Psoas muscle (tissue), 8 donors: ENCODE measurements at regions of chr2 and their contacts with region 1.

Region 1: DNA sequence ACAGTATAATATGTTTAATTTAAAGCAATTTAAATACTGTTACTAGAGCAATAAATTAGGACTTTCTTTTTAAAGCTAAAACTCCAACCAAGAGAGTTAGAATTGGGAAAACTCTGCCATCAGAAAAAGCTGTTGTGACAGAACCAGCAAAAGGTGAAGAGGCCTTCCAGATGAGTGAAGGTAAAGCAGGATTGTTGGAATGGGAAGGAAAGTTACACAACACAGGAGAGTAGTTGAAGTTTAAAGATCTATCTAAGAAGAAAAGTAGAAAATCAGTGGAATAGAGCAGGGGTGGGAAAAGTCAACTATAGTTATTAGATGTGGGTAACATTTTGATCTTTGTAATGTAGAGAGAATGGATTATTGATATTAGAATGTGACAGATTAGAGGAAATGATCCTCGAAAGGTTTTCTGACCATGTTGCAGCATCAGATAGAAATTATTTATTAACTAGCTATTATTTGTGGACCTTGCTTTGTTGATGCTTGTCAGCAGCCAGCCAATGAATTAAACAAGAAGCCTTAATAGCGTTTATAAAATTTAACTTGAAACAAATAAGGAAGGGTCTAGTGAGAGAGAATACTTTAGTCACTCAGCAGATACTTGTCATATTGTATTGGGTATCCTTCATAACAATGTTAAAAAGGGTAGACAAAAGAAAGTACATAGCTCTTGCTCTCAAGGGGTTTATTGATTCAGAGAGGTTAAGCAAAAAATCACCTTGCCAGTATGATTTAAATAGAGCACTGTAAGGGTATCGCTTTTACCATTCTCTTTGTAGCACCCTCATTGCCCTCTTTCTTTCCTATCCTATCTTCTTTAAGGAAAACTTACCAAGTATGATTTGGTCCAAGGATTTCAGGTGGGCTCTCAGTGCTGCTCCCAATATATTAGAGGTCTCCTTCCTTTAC is 24.6 kb upstream of the DYSF start:
- DNase-seq: no peak
- ATAC-seq: no peak
- H3K4me3 ChIP-seq: no peak overlapping the region
- H3K27ac ChIP-seq: peak overlapping the region; percentile 12
- H3K4me1 ChIP-seq: peaks cover 11% of the 10 kb centered on the region
- H3K27me3 ChIP-seq: no peaks in the 10 kb centered on the region
- CTCF ChIP-seq: no peak

Region 2: DNA sequence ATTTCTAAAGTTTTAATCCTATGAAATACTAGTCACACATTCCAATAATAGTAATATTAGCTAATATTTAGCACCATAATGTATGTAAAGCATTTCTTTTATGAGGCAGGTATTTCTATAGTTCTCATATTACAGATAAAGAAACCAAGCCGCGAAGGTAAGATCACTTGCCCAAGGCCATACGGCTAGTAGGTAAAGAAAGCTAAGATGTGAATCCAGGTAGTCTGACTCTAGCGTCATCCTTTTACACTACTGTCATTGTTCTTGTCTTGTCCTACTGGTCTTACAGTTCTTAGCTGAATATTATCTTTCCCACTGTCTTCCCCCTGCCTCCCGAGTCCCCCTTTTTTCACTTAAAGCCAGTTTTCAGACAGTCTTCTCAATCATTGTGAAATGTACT is 18.6 kb after region 1 on chr2:
- intact Hi-C with region 1: loop called in 1 of 2 experiments (anchors 2 kb)
- DNase-seq: no peak
- ATAC-seq: no peak
- H3K4me3 ChIP-seq: no peak overlapping the region
- H3K27ac ChIP-seq: peak overlapping the region; percentile 18
- H3K4me1 ChIP-seq: peaks cover 25% of the 10 kb centered on the region
- H3K27me3 ChIP-seq: no peaks in the 10 kb centered on the region
- CTCF ChIP-seq: no peak